ENCODE measurements at regions of chr7 and their contacts with region 1.

Region 1: DNA sequence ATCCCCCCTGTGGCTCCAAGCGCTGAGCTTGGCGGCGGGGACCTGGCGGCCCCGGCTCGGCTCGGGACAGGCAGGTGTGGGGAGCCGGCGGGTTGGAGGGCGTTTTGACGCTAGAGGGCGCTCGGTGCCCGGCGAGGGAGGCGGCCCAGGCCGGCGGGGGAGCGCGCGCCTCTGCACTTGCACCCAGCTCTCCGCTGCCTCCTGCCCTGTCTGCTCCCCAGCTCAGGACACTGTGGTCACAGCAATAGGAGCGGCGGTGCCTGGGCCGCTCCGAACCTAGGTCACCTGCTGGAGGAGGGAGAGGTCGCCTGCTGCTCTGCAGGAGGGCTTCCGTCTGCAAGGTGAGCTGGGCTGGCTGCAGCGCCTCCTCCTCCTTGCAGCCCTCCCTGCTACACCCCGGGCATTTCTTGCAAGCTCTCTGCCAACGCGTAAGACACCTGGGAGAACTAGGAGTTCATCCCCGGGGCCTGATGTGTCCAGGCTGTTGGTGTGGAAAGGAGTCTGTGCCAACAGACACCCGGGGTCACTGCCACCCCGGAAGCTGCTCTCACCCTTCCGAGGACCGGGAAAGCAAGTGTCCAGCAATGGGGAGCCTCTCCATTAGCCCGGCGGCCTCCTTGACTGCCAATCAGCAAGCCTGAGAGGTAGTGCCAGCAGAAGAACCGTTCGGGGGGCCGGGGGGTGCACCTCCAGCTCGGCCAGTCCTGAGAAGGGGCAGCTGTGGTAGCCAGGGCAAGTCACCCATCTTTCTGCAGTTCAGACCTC is 620.4 kb downstream of the GALNT17 start:
- DNase-seq: peak; percentile 53 to 98
- H3K4me3 ChIP-seq: peak overlapping the region; percentile 30 to 56 (median 50); a peak in 7 of 8 replicates
- H3K27ac ChIP-seq: no peak overlapping the region
- H3K4me1 ChIP-seq: no peaks in the 10 kb centered on the region; a peak in 1 of 7 replicates
- H3K27me3 ChIP-seq: no peaks in the 10 kb centered on the region
- CTCF ChIP-seq: peak; percentile 75 to 84 (median 83)
- EP300 ChIP-seq: no peak
- POLR2A ChIP-seq: no peak
- RAD21 ChIP-seq: peak; percentile 91

Region 2: GRCh38 chr7:71739520-71740173 is 12.7 kb before region 1 on chr7:
- CTCF ChIA-PET with region 1: interaction called, 14 read pairs
- POLR2A ChIA-PET with region 1: interaction called, 6 read pairs
- DNase-seq: peak; percentile 44 to 56
- H3K4me3 ChIP-seq: no peak overlapping the region
- H3K27ac ChIP-seq: no peak overlapping the region
- H3K4me1 ChIP-seq: peaks cover 4 to 13% (median 6%) of the 10 kb centered on the region in 4 experiments
- H3K27me3 ChIP-seq: no peaks in the 10 kb centered on the region
- CTCF ChIP-seq: no peak
- EP300 ChIP-seq: no peak
- POLR2A ChIP-seq: no peak
- RAD21 ChIP-seq: peak; percentile 35 to 40

Region 3: DNA sequence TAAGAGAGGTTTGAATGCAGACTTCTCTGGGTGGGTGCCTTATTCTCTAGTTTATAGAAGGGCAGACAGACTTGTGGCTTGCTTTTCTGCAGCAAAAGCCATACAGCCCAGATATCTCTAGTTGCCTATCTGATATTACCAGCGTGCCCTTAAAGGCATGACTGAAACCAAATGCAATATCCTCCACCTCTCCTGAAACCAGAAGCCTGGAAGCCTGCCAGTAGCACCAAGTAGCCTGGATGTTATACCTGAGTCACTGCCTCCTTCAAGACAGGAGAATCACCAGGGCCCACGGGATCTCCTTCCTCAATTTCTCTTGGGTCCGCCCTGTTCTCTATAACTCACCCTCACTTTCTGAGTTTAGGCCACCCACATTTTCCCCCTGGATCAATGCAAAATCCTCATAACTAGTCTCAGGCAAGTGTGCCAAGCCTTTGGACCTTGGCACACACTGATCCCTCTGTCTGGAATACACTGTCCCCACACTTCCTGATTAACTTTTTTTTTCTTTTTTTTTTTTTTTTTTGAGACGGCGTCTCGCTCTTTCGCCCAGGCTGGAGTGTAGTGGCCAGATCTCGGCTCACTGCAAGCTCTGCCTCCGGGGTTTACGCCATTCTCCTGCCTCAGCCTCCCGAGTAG is 18.0 kb after region 1 on chr7:
- CTCF ChIA-PET with region 1: interaction called, 11 read pairs
- POLR2A ChIA-PET with region 1: interaction called, 3 read pairs
- DNase-seq: peak in 1 of 2 experiments; percentile 33
- H3K4me3 ChIP-seq: no peak overlapping the region
- H3K27ac ChIP-seq: no peak overlapping the region
- H3K4me1 ChIP-seq: no peaks in the 10 kb centered on the region
- H3K27me3 ChIP-seq: no peaks in the 10 kb centered on the region
- CTCF ChIP-seq: no peak
- EP300 ChIP-seq: no peak
- POLR2A ChIP-seq: no peak
- RAD21 ChIP-seq: no peak